CD8-positive, alpha-beta T cell (primary cell): ENCODE measurements at regions of chr17 and their contacts with region 1.

Region 1: GRCh38 chr17:49997791-49998703 is 3.0 kb upstream of the DLX3 start:
- DNase-seq: peak; percentile 66 to 92 (median 83)
- ATAC-seq: peak; percentile 78
- H3K4me3 ChIP-seq: no peak overlapping the region
- H3K4me3 Mint-ChIP-seq: no peak overlapping the region
- H3K27ac ChIP-seq: no peak overlapping the region
- H3K27ac Mint-ChIP-seq: no peak overlapping the region
- H3K4me1 ChIP-seq: peaks cover 31% of the 10 kb centered on the region
- H3K4me1 Mint-ChIP-seq: peaks cover 33% of the 10 kb centered on the region
- H3K27me3 ChIP-seq: peaks cover 38 to 53% of the 10 kb centered on the region in 2 experiments
- H3K27me3 Mint-ChIP-seq: peaks cover 77% of the 10 kb centered on the region
- CTCF ChIP-seq: peak; percentile 85

Region 2: GRCh38 chr17:49567871-49568694 is 430.0 kb before region 1 on chr17:
- CTCF ChIA-PET with region 1: interaction called, 20 read pairs
- POLR2A ChIA-PET with region 1: no interaction called
- intact Hi-C with region 1: loop called in 1 of 2 experiments (anchors 1 kb)
- DNase-seq: peak; percentile 69 to 91 (median 82)
- ATAC-seq: peak; percentile 59
- H3K4me3 ChIP-seq: peak overlapping the region; percentile 6 to 25
- H3K4me3 Mint-ChIP-seq: peak overlapping the region; percentile 62
- H3K27ac ChIP-seq: no peak overlapping the region
- H3K27ac Mint-ChIP-seq: no peak overlapping the region
- H3K4me1 ChIP-seq: peaks cover 12% of the 10 kb centered on the region
- H3K4me1 Mint-ChIP-seq: peaks cover 8% of the 10 kb centered on the region
- H3K27me3 ChIP-seq: no peaks in the 10 kb centered on the region
- H3K27me3 Mint-ChIP-seq: peaks cover 12% of the 10 kb centered on the region
- CTCF ChIP-seq: peak; percentile 96

Region 3: DNA sequence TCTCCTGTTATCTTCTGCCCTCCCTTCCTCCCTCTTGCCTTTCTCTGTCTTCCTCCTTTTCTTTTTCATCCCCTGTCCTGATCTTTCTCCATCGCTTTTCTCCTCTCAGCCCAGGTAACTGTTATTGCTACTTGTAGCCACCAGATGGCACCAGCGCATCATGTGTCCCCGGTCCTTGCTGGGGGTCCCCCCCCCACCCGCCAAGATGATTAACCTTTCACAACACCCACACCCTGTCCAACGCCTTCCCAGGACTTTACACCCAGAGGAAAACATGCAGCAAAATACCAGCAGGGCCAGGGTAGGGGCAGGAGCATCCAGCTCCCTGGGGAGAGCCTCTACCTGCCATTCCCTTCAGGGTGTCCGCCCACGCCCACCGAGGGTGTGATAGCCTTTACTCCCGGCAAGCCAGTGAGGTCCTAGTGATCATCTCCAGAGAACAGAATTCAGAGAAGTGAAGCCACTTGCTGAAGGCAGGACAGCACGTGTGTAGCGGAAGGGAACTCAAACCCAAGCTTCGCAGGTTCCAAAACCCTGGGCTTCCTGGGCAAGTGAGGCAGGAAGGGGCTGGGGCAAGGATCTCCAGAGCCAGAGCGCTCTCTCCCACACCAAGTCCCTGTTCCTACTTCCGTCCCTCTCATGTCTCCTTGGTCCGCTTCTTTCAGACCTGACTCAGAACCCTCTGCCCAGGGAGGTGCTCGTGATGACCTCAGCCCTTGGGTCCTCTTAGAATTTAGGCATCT is 136.7 kb before region 1 on chr17:
- CTCF ChIA-PET with region 1: interaction called, 198 read pairs
- POLR2A ChIA-PET with region 1: no interaction called
- intact Hi-C with region 1: loop called (anchors 1 kb)
- DNase-seq: peak; percentile 14 to 81 (median 66)
- ATAC-seq: peak; percentile 90
- H3K4me3 ChIP-seq: no peak overlapping the region
- H3K4me3 Mint-ChIP-seq: no peak overlapping the region
- H3K27ac ChIP-seq: no peak overlapping the region
- H3K27ac Mint-ChIP-seq: no peak overlapping the region
- H3K4me1 ChIP-seq: no peaks in the 10 kb centered on the region
- H3K4me1 Mint-ChIP-seq: peaks cover 4% of the 10 kb centered on the region
- H3K27me3 ChIP-seq: peaks cover 0 to 3% of the 10 kb centered on the region in 2 experiments
- H3K27me3 Mint-ChIP-seq: peaks cover 11% of the 10 kb centered on the region
- CTCF ChIP-seq: peak; percentile 93

Region 4: GRCh38 chr17:49910094-49910857 is 87.8 kb before region 1 on chr17:
- CTCF ChIA-PET with region 1: interaction called, 35 read pairs
- POLR2A ChIA-PET with region 1: no interaction called
- intact Hi-C with region 1: no loop called
- DNase-seq: peak in 3 of 9 experiments; percentile 21 to 34 (median 29)
- ATAC-seq: no peak
- H3K4me3 ChIP-seq: peak overlapping the region in 1 of 2 experiments; percentile 1
- H3K4me3 Mint-ChIP-seq: peak overlapping the region; percentile 76
- H3K27ac ChIP-seq: no peak overlapping the region
- H3K27ac Mint-ChIP-seq: no peak overlapping the region
- H3K4me1 ChIP-seq: no peaks in the 10 kb centered on the region
- H3K4me1 Mint-ChIP-seq: peaks cover 10% of the 10 kb centered on the region
- H3K27me3 ChIP-seq: peaks cover 6 to 30% of the 10 kb centered on the region in 2 experiments
- H3K27me3 Mint-ChIP-seq: peaks cover 58% of the 10 kb centered on the region
- CTCF ChIP-seq: no peak

Region 5: DNA sequence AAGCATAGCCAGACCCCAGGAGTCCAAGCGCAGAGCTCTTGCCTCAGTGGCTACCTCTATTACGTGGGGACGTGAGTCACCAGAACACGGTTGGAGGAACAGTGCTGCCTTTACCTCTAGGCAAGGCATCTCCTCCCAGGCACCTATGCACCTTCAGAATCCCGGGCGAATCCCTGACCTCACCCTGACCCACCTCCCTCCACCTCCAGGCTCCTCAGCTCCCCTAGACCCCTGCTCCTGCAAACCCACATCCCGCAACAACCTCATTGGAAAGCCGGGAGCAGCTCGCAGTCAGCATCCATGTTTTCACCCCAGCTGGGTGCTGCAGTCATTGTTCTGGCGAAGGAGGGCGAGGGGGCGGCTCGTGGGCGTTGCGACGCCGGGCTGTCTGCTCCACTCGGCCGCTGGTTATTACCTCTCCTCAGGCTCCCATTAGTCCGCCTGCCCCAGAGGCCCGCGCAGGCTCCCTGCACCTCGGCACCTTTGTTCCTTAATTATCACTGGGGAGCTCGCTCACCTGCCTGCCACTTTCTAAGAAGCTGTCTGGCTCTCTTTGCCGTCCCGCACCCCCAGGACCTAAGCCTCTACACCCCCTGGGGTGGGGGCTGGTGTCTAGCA is 53.7 kb before region 1 on chr17:
- CTCF ChIA-PET with region 1: interaction called, 255 read pairs
- POLR2A ChIA-PET with region 1: no interaction called
- intact Hi-C with region 1: no loop called
- DNase-seq: no peak
- ATAC-seq: no peak
- H3K4me3 ChIP-seq: no peak overlapping the region
- H3K4me3 Mint-ChIP-seq: no peak overlapping the region
- H3K27ac ChIP-seq: no peak overlapping the region
- H3K27ac Mint-ChIP-seq: no peak overlapping the region
- H3K4me1 ChIP-seq: no peaks in the 10 kb centered on the region
- H3K4me1 Mint-ChIP-seq: no peaks in the 10 kb centered on the region
- H3K27me3 ChIP-seq: peaks cover 0 to 2% of the 10 kb centered on the region in 2 experiments
- H3K27me3 Mint-ChIP-seq: peaks cover 34% of the 10 kb centered on the region
- CTCF ChIP-seq: no peak

Region 6: GRCh38 chr17:49987681-49988441 is 10.2 kb before region 1 on chr17:
- CTCF ChIA-PET with region 1: interaction called, 85 read pairs
- POLR2A ChIA-PET with region 1: no interaction called
- intact Hi-C with region 1: no loop called
- DNase-seq: peak in 1 of 9 experiments; percentile 29
- ATAC-seq: no peak
- H3K4me3 ChIP-seq: no peak overlapping the region
- H3K4me3 Mint-ChIP-seq: no peak overlapping the region
- H3K27ac ChIP-seq: no peak overlapping the region
- H3K27ac Mint-ChIP-seq: no peak overlapping the region
- H3K4me1 ChIP-seq: peaks cover under 1% of the 10 kb centered on the region
- H3K4me1 Mint-ChIP-seq: peaks cover 4% of the 10 kb centered on the region
- H3K27me3 ChIP-seq: peaks cover 3 to 15% of the 10 kb centered on the region in 2 experiments
- H3K27me3 Mint-ChIP-seq: peaks cover 51% of the 10 kb centered on the region
- CTCF ChIP-seq: no peak

Region 7: DNA sequence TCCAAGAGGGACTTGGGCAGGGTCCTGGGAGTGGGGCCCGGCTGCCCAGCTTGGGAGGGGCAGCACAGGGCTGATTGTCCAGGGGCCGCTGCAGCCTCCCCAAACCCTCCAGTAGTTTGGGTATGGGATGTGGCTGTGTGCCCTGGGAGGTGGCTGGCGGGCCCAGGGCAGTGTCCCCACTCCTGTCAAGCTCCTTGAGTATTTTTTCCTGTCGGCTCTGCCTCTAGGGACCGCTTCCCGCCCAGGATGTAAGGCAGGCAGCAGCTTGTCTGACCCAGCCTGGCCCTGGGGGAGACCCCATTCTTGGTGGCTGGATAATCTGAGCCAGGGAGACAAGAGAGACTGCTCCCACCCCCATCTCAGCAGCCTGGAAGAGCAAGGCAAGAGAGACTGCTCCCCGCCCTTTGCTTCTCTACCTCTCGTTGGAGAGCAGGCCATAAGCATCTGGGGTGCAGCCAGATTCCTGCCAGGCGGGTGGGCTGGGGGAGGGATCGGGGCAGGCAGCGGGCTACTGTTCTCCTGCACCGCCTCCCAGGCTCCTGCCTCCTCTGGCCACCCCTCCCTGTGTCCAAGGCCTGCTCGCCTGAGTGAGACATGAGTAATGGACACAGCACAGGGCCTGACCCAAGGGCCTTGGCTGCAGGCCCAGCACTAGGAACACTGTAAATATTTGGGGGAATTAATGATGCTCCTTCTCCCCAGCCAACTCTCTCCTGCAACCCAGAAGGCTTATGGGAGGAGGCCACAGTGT is 39.4 kb after region 1 on chr17:
- CTCF ChIA-PET with region 1: no interaction called
- POLR2A ChIA-PET with region 1: no interaction called
- intact Hi-C with region 1: no loop called
- DNase-seq: no peak
- ATAC-seq: no peak
- H3K4me3 ChIP-seq: no peak overlapping the region
- H3K4me3 Mint-ChIP-seq: no peak overlapping the region
- H3K27ac ChIP-seq: no peak overlapping the region
- H3K27ac Mint-ChIP-seq: no peak overlapping the region
- H3K4me1 ChIP-seq: no peaks in the 10 kb centered on the region
- H3K4me1 Mint-ChIP-seq: no peaks in the 10 kb centered on the region
- H3K27me3 ChIP-seq: no peaks in the 10 kb centered on the region
- H3K27me3 Mint-ChIP-seq: peaks cover 9% of the 10 kb centered on the region
- CTCF ChIP-seq: no peak

Region 8: GRCh38 chr17:50094753-50095619 is 96.9 kb after region 1 on chr17 and contains the start of gene PDK2:
- CTCF ChIA-PET with region 1: interaction called, 11 read pairs
- POLR2A ChIA-PET with region 1: no interaction called
- intact Hi-C with region 1: no loop called
- DNase-seq: peak; percentile 94 to 98 (median 97)
- ATAC-seq: peak; percentile 94
- H3K4me3 ChIP-seq: peak within 1 kb of the TSS; percentile 69 to 80
- H3K4me3 Mint-ChIP-seq: peak within 1 kb of the TSS; percentile 99
- H3K27ac ChIP-seq: peak within 1 kb of the TSS; percentile 71 to 82
- H3K27ac Mint-ChIP-seq: peak within 1 kb of the TSS; percentile 97
- H3K4me1 ChIP-seq: peaks cover 15% of the 10 kb centered on the region
- H3K4me1 Mint-ChIP-seq: peaks cover 34% of the 10 kb centered on the region
- H3K27me3 ChIP-seq: no peaks in the 10 kb centered on the region
- H3K27me3 Mint-ChIP-seq: no peaks in the 10 kb centered on the region
- CTCF ChIP-seq: no peak
- total RNA-seq, gene PDK2: 8.4 to 10.4 TPM